HCT116 (cell line): ENCODE measurements at regions of chr10 and their contacts with region 1.

Region 1: DNA sequence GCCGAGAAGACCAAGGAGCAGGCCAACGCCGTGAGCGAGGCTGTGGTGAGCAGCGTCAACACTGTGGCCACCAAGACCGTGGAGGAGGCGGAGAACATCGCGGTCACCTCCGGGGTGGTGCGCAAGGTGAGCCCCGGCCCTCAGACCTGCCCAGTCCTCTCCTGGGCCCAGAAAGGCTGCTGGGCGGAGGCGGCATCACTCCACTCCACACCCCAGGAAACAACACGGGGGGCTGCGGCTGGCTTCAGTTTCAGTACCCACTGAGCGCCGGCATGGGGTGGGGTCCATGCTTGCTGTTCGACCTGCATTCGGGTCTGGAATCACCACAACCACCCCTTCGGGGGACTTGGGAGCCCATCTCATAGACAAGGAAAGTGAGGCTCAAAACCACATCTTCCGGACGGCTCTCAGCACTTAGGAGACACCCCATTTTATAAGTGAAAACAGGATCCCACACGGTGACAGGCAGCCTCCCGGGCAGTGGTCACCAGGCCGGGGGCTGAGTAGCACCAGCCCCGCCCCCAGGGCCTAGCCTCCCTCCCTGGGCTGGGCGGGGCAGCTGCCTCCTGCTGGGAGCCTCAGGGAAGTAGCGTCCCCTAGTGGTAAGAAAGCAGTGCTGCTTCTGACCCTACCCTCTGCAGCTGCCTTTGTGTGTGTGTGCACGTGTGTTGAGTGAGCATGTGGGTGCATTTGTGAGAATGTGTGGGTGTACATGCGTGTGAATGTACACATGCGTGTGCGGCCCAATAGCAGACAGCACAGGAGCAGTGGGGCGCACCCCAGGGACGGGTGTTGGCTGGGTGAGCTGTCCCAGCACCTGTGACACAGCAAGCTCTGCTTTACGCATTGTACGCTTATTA is 1.8 kb downstream of the SNCG start:
- DNase-seq: peak; percentile 64
- ATAC-seq: peak; percentile 68
- H3K4me3 ChIP-seq: peak overlapping the region; percentile 50 to 57
- H3K27ac ChIP-seq: peak overlapping the region; percentile 94
- H3K4me1 ChIP-seq: peaks cover 48 to 78% of the 10 kb centered on the region in 2 experiments
- H3K27me3 ChIP-seq: no peaks in the 10 kb centered on the region
- CTCF ChIP-seq: peak in 2 of 3 experiments; percentile 99 to 100; a peak in 4 of 6 replicates
- POLR2A ChIP-seq: no peak
- RAD21 ChIP-seq: no peak

Region 2: DNA sequence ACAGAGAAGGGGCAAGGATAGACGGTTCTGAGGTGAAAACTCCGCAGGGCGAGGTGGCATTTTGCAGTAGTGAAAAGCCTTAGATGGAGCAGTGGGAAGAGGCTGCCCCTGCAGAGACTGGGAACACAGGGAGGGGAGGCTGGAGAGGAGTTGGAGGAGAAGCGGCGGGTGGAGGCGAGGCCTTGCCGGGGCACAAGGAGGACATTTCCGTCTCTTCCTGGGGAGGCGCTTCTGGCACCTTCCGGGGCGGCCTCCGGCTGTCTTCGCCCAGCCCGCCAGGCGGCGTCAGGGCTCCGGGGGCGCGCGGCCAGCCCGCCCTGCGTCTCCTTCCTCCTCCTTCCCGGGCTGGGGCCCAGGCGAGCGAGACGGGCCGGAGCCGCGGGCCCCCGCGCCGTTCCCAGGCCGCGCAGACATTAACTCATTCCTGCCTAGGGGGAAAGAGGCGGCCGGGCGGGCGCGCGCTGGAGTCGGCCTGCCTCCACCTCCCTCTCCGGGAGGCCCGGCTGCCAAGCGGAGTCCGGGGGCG is 249.2 kb before region 1 on chr10:
- CTCF ChIA-PET with region 1: interaction called, 3 read pairs
- POLR2A ChIA-PET with region 1: no interaction called
- RAD21 ChIA-PET with region 1: no interaction called
- intact Hi-C with region 1: loop called (anchors 5 kb)
- DNase-seq: peak; percentile 54
- ATAC-seq: peak; percentile 90
- H3K4me3 ChIP-seq: peak overlapping the region; percentile 63 to 87
- H3K27ac ChIP-seq: peak overlapping the region; percentile 98
- H3K4me1 ChIP-seq: peaks cover 8 to 19% of the 10 kb centered on the region in 2 experiments; a peak in 3 of 4 replicates
- H3K27me3 ChIP-seq: no peaks in the 10 kb centered on the region
- CTCF ChIP-seq: peak; percentile 63 to 77 (median 67)
- POLR2A ChIP-seq: no peak
- RAD21 ChIP-seq: peak; percentile 73

Region 3: DNA sequence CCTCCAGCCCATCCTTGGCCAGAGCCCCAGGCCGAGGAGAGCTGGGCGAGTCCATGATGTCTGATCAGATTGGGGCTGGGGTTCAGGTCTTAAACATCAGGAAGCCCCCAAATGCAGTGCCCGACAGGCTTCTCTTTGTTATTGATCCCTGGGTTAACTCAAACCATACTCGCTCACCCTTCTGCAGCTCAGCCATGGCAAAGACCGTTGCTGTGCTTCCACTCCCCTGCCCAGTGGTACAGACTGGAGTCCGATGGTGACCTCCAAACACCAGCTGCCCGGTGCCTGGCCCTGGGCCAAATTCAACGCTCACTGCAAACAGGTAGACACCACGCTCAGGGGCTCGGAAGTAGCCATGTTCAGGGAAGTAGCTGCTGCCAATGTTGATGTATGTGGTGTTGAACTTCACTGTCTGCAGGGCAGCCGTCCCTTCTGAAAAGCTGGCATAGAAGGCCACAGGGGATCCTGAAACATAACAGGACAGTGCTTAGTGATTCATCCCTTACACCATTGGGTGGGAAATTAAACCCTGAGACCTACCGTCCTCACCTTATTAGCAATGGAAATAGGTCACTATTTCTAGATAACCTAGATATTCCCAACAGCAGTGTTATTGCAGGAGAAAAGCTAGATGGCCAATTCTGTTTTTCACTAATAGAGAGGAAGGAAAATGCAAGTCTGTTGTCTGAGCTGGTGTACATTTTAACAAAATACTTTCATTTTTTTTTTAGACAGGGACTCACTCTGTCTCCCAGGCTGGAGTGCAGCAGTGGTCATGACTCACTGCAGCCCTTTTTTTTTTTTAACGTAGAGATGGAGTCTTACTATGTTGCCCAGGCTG is 23.4 kb before region 1 on chr10:
- CTCF ChIA-PET with region 1: interaction called, 10 read pairs
- POLR2A ChIA-PET with region 1: no interaction called
- RAD21 ChIA-PET with region 1: interaction called in 1 of 2 experiments, 3 read pairs
- intact Hi-C with region 1: loop called (anchors 1 kb)
- DNase-seq: no peak
- ATAC-seq: no peak
- H3K4me3 ChIP-seq: no peak overlapping the region
- H3K27ac ChIP-seq: no peak overlapping the region
- H3K4me1 ChIP-seq: peaks cover 0 to 10% of the 10 kb centered on the region in 2 experiments; a peak in 3 of 4 replicates
- H3K27me3 ChIP-seq: no peaks in the 10 kb centered on the region
- CTCF ChIP-seq: no peak
- POLR2A ChIP-seq: no peak
- RAD21 ChIP-seq: no peak

Region 4: DNA sequence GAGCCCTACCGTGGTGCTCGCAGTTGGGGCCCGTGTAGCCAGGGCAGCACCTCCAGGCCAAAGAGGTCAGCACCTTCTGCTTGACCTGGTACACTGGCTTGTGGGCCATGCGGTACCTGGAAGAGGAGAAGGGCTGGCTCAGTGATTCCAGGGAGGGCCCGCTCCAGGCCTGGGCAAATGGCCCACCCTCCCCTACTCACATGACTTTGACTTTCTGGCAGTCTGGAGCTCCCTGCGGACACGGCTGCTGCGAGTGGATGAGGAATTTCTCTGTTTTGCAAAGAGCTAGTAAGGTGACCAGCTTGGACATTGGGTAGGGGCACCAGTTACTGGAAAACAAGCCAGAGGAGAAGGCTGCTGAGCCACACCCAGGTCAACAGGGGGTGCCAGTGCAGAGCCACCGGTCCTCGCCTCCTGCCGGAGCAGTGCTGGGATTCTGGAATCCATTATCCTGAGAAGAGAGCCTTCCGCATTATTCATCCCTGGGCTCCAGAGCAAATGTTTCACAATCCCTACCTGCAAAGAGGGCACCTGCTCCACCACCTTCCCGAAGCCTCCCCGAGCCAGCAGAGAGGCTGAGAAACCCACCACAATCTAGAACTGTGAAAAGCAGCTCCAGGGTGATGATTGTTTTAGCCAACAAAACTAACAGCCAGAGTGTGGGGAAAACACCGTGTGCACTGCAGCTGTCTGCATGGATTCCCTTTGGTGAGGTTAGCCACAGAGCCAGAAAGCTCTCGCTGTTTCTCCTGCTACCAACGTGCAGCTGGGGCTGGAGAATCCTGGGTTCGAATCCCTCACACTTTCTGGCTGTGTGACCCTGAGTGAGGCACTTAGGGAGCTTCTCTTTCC is 14.6 kb before region 1 on chr10:
- CTCF ChIA-PET with region 1: interaction called, 10 read pairs
- POLR2A ChIA-PET with region 1: interaction called, 3 read pairs
- RAD21 ChIA-PET with region 1: interaction called, 3 to 4 read pairs
- intact Hi-C with region 1: no loop called
- DNase-seq: no peak
- ATAC-seq: peak; percentile 86
- H3K4me3 ChIP-seq: no peak overlapping the region
- H3K27ac ChIP-seq: no peak overlapping the region
- H3K4me1 ChIP-seq: peaks cover 0 to 17% of the 10 kb centered on the region in 2 experiments; a peak in 2 of 4 replicates
- H3K27me3 ChIP-seq: no peaks in the 10 kb centered on the region
- CTCF ChIP-seq: peak; percentile 39 to 54 (median 45); a peak in 4 of 6 replicates
- POLR2A ChIP-seq: no peak
- RAD21 ChIP-seq: peak; percentile 68

Region 5: DNA sequence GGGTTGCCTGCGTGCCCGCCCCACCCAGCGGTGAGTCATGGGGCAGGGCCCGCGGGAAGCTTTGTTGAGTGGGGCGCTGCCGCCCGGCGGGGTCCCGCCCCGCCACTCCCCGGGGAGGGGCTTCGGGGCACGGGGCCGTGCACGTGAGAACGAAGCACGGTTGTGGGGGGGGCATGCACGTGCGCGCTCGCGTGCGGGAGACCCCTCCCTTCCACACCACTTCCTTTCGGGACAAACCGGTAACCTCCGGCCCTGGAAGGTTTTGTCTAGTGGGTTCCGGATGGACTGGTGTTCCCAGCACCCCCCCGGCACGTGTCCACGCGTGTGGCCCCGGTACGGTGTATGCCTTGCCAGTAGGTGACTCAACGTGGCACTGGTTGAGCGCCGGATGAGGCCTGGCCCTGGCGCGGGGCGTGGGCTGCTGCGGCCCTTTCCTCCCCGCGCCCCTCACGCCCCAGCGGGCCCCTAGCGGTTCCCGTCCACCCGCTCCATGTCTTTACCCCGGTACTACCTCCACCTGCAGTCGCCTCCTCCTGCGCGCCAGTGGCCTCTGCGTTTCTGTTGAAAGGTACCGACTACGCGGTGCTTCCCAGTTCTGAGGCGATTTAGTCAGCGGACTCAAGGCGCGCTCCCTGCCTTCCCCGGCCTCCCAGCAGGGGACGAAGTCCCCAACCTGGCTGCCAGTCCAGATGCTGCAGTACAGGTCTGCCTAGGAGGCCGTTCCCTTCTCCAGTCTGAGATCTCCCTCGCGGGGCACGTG is 11.2 kb after region 1 on chr10:
- CTCF ChIA-PET with region 1: interaction called, 36 read pairs
- POLR2A ChIA-PET with region 1: interaction called, 58 read pairs
- RAD21 ChIA-PET with region 1: interaction called in 1 of 2 experiments, 3 read pairs
- intact Hi-C with region 1: no loop called
- DNase-seq: peak; percentile 88
- ATAC-seq: peak; percentile 49
- H3K4me3 ChIP-seq: peak overlapping the region; percentile 70 to 79
- H3K27ac ChIP-seq: peak overlapping the region; percentile 95
- H3K4me1 ChIP-seq: peaks cover 51 to 83% of the 10 kb centered on the region in 2 experiments
- H3K27me3 ChIP-seq: no peaks in the 10 kb centered on the region
- CTCF ChIP-seq: 0 out of 6 replicates have a peak, but pooled peaks of 1 of the 3 experiments have one; percentile 11
- POLR2A ChIP-seq: peak; percentile 32
- RAD21 ChIP-seq: no peak

Region 6: GRCh38 chr10:87578842-87579401 is 618.7 kb after region 1 on chr10:
- CTCF ChIA-PET with region 1: no interaction called
- POLR2A ChIA-PET with region 1: no interaction called
- RAD21 ChIA-PET with region 1: no interaction called
- intact Hi-C with region 1: no loop called
- DNase-seq: no peak
- ATAC-seq: no peak
- H3K4me3 ChIP-seq: no peak overlapping the region
- H3K27ac ChIP-seq: no peak overlapping the region
- H3K4me1 ChIP-seq: peaks cover 0 to 6% of the 10 kb centered on the region in 2 experiments; a peak in 1 of 4 replicates
- H3K27me3 ChIP-seq: no peaks in the 10 kb centered on the region
- CTCF ChIP-seq: no peak
- POLR2A ChIP-seq: no peak
- RAD21 ChIP-seq: no peak

Region 7: DNA sequence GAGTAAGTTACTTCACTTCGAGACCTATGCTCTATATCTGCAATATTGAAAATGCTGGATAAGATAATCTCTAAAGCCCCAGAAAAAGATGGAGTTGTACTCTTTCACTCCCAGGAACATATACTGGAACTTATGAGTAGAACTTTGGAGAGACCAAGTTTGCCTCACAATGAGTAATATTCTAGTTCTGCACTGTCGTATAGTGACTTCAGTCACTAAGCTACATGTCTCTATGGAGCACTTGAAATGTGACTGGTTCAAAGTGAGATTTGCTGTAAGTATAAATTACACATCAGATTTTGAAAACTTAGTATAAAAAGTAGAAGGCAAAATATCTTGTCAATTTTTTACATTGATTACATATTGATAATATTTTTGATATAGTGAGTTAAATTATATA is 1019.6 kb after region 1 on chr10:
- CTCF ChIA-PET with region 1: no interaction called
- POLR2A ChIA-PET with region 1: no interaction called
- RAD21 ChIA-PET with region 1: no interaction called
- intact Hi-C with region 1: no loop called
- DNase-seq: no peak
- ATAC-seq: no peak
- H3K4me3 ChIP-seq: no peak overlapping the region
- H3K27ac ChIP-seq: no peak overlapping the region
- H3K4me1 ChIP-seq: no peaks in the 10 kb centered on the region
- H3K27me3 ChIP-seq: no peaks in the 10 kb centered on the region
- CTCF ChIP-seq: no peak
- POLR2A ChIP-seq: no peak
- RAD21 ChIP-seq: no peak